ENCODE measurements at regions of chr9 and their contacts with region 1.

Region 1: DNA sequence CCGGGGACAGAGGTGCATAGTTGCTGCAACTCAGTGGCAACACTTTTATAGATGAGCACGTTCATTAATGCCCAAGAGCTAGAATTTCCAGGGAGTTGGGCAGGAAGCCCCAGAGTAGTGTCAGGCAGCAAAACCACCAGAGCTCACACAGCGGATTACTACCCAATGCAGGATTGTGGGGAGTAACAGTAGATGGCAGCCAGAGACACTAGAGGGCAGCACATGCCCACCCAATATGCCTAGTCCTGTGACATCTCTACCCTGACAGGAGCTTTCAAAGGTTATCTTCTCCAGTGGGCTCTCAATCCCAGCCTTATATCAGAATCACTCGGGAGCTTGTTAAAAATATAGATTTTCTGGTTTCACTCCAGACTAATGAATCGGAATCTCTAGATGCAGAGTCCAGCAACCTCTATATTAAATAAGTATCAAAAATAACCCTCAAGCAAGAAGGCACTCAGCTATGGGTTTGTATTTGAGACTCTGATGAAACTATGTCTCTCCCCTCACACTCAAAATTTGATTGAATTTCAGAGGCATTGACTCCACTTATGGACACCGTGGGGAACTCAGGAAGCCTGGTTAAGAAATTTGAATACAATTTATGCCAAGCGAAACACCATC is 58.4 kb upstream of the PHF24 start:
- DNase-seq: peak; percentile 75 to 90 (median 85)
- ATAC-seq: peak; percentile 98 to 99
- H3K4me3 ChIP-seq: no peak overlapping the region
- H3K27ac ChIP-seq: no peak overlapping the region
- H3K4me1 ChIP-seq: no peaks in the 10 kb centered on the region
- H3K27me3 ChIP-seq: no peaks in the 10 kb centered on the region

Region 2: DNA sequence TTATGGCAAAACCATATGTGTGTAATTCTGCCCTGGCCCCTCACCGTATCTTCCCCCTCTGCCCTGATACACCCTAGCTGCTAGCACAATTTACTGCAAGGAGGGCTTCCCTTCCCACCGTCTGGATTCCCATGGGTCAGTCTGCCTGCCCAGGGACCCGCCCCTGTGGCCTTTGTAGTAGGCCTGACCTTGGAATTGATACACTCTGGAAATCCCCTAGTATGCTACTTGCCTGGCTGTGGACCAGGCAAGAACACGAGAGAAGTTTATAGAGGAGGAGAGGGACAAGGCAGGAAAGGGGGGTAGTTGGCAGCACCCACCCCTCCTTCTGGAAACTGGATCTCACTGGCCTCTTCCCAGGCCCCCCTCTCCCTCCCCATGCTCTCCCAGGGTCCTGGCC is 73.9 kb before region 1 on chr9:
- intact Hi-C with region 1: no loop called
- DNase-seq: peak in 1 of 3 donors; percentile 11
- ATAC-seq: no peak
- H3K4me3 ChIP-seq: no peak overlapping the region
- H3K27ac ChIP-seq: no peak overlapping the region
- H3K4me1 ChIP-seq: no peaks in the 10 kb centered on the region
- H3K27me3 ChIP-seq: no peaks in the 10 kb centered on the region

Region 3: DNA sequence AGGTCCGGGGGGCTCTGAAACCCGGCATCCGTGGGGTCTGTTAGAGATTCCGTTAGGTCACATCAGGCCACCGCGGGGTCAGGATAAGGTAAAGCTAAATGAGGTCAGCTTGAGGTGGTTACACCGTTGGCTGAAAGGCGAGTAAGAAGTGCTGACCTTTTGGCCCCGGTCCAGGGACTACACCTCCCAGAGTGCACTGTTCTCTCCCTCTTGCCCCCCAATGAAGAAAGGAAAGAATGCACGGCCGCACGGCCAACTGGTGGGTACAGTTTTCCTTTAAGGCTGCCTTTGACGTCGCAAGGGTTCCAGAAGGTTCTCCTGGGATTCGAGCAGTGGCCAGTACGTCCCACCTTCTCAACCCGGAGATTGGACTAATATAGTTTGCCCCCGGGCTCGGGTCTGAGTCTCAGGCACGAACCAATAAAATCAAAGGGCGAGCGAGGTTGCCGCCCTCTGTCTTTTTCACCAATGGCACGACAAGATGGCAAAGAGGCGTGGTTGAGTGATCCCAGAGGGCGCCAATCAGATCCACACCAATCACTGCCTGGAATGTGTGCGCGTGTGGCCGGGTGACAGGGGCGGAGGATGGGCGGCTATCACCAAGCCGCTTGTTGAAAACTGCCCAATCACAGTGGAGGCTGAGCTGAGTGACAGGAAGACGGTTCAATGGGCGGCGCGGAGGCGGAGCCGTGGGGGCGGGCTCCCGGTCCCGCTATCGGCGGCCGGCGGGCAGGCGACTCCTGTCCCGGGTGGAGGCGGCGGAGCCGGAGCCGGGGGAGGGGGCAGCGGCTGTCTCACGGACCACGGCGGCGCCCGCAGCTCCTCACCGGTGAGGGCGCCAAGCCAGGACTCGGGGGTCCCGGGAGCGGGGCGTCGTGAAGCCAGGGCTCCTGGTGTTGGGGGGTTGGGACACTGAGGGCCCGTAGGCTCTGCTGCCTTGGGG is 89.6 kb after region 1 on chr9 and contains the start of gene DNAJB5:
- intact Hi-C with region 1: loop called (anchors 5 to 10 kb)
- DNase-seq: peak; percentile 99
- ATAC-seq: peak; percentile 87 to 91
- H3K4me3 ChIP-seq: peak within 1 kb of the TSS; percentile 90
- H3K27ac ChIP-seq: peak within 1 kb of the TSS; percentile 99
- H3K4me1 ChIP-seq: peaks cover 27% of the 10 kb centered on the region
- H3K27me3 ChIP-seq: no peaks in the 10 kb centered on the region
- total RNA-seq, gene DNAJB5: 37.8 to 75.7 (median 51.4) TPM

Region 4: DNA sequence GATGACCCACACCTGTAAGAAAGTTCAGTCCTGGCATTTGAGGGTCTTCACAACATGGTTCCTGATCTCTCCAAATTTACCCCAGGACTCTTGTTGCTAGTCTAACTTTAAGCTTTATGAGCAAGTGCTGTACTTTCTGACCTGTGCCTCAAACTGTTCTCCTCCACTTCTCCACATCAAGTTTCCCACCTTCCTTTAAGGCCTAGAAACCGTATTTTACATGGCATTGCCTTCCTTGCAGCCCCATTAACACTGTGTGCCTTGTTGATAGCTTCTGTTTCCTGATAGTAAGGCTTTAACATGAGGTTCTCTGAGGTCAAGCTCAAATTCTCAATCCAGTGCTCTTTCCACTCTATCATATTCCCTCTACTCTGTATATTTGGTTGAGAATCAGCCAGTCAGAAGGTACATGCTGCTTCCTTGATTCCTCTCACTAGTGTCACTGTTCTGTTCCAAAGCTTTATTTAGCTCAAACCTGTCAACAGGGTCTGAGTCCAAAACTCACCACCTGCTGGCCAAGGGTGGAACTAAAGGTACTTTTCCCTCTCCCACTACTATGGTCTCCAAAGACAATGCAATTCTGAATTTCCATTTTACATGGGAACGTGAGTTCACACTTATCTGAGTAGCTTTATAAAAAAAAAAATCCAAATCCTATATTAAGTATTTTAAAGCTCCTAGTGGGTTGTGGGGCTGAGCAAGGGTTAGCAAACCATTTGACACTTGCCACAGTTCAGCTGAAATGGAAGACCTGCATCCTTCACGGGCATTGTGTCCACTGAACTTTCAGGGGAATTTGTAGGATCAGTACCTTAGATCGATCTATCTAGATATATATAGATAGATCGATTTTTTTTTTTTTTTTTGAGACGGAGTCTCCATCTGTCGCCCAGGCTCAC is 151.7 kb after region 1 on chr9:
- intact Hi-C with region 1: loop called in 1 of 4 experiments (anchors 10 kb)
- DNase-seq: peak in 2 of 3 donors; percentile 61 to 67
- ATAC-seq: peak; percentile 74 to 83
- H3K4me3 ChIP-seq: no peak overlapping the region
- H3K27ac ChIP-seq: peak overlapping the region; percentile 82
- H3K4me1 ChIP-seq: peaks cover 3% of the 10 kb centered on the region
- H3K27me3 ChIP-seq: no peaks in the 10 kb centered on the region

Region 5: GRCh38 chr9:35096035-35096849 is 196.6 kb after region 1 on chr9 and contains the start of gene PIGO:
- intact Hi-C with region 1: loop called in 3 of 4 experiments (anchors 2 to 5 kb)
- DNase-seq: peak; percentile 90 to 97 (median 96)
- ATAC-seq: peak; percentile 94 to 95
- H3K4me3 ChIP-seq: peak within 1 kb of the TSS; percentile 60
- H3K27ac ChIP-seq: peak within 1 kb of the TSS; percentile 92
- H3K4me1 ChIP-seq: no peaks in the 10 kb centered on the region
- H3K27me3 ChIP-seq: no peaks in the 10 kb centered on the region
- total RNA-seq, gene PIGO: 10.2 to 17.6 (median 12.7) TPM

Measured in right cardiac atrium (tissue), 5 donors.